Natural killer cell (primary cell): ENCODE measurements at regions of chr1 and their contacts with region 1.

Region 1: DNA sequence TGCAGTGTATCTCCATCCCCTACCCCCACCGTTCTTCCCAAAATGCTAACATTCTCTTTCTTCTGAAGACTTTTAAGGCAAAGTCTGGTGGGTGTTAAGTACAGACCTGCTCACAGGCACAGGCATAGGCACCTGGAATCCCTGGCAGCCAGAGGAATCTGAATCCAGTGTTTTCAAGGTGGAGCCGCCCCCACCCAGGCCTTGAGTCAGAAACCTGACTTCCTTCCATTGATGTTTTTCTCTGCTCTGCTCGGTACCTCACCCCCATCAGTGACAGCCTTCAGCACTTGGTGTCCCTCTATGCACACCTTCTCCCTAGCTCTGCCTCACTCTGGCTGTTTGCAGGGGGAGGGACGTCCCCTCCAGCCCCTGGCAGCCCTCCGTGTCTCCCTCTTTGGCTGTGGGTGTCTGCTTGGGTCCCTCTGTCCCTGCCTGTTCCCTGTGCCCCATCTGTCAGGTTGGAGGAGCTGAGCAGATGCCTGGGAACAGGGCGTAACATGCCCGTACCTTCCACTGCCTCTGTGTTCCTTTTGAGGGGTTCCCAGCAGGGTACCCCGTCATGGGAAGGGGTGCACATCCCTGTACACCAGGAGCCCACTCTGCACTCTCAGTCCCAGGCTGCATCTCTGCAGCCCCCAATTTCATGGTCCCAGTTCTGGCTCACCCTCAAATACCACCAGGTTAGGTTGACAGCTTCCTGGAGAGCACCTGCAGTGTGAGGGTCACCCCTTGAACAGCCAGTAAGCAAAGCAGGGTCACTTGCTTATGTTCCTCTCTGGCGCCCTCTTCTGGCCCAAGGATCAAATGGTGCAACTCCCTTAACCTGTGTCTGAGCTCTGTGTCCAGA is 6.7 kb downstream of the NCDN start:
- DNase-seq: peak; percentile 76 to 90
- ATAC-seq: peak; percentile 73 to 90 (median 83)
- H3K4me3 ChIP-seq: no peak overlapping the region
- H3K4me3 Mint-ChIP-seq: no peak overlapping the region
- H3K27ac ChIP-seq: no peak overlapping the region
- H3K27ac Mint-ChIP-seq: peak overlapping the region in 1 of 2 donors; percentile 82
- H3K4me1 ChIP-seq: peaks cover 10% of the 10 kb centered on the region
- H3K4me1 Mint-ChIP-seq: peaks cover 20 to 47% of the 10 kb centered on the region in 2 donors
- H3K27me3 ChIP-seq: no peaks in the 10 kb centered on the region
- H3K27me3 Mint-ChIP-seq: no peaks in the 10 kb centered on the region
- CTCF ChIP-seq: peak; percentile 78

Region 2: DNA sequence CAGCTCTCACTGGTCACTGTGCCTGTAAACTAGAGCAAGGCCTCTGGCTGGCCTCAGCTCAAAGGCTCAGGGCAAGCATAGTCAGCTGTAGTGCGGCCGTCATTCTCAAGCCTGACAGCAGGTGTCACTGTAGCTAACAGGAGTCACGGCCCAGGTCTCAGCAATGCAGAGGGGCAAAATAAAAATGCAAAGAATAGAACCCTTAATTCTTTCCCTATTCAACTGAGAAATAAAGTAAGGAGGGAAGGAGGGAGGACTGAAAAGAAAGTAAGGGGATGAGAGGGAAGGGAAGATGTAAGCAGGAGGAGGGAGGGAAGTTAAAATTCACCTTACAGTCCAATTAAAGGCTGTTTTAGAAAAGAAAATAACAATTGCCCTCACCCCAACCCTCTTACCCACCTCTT is 113.1 kb before region 1 on chr1:
- intact Hi-C with region 1: loop called (anchors 1 kb)
- DNase-seq: peak; percentile 60 to 88
- ATAC-seq: peak; percentile 86 to 98 (median 97)
- H3K4me3 ChIP-seq: no peak overlapping the region
- H3K4me3 Mint-ChIP-seq: no peak overlapping the region
- H3K27ac ChIP-seq: no peak overlapping the region
- H3K27ac Mint-ChIP-seq: peak overlapping the region in 1 of 2 donors; percentile 12
- H3K4me1 ChIP-seq: no peaks in the 10 kb centered on the region
- H3K4me1 Mint-ChIP-seq: peaks cover 5 to 6% of the 10 kb centered on the region in 2 donors
- H3K27me3 ChIP-seq: no peaks in the 10 kb centered on the region
- H3K27me3 Mint-ChIP-seq: no peaks in the 10 kb centered on the region
- CTCF ChIP-seq: peak; percentile 79

Region 3: GRCh38 chr1:35641233-35641866 is 77.1 kb after region 1 on chr1 and contains the start of gene PSMB2:
- intact Hi-C with region 1: loop called (anchors 5 kb)
- DNase-seq: peak; percentile 97 to 98
- ATAC-seq: peak; percentile 94
- H3K4me3 ChIP-seq: peak within 1 kb of the TSS; percentile 92
- H3K4me3 Mint-ChIP-seq: peak within 1 kb of the TSS; percentile 100
- H3K27ac ChIP-seq: peak within 1 kb of the TSS; percentile 81
- H3K27ac Mint-ChIP-seq: peak within 1 kb of the TSS; percentile 99 to 100
- H3K4me1 ChIP-seq: peaks cover 12% of the 10 kb centered on the region
- H3K4me1 Mint-ChIP-seq: peaks cover 33 to 34% of the 10 kb centered on the region in 2 donors
- H3K27me3 ChIP-seq: peaks cover under 1% of the 10 kb centered on the region
- H3K27me3 Mint-ChIP-seq: peaks cover 12 to 25% of the 10 kb centered on the region in 2 donors
- CTCF ChIP-seq: no peak
- total RNA-seq, gene PSMB2: 37.0 to 45.0 (median 37.3) TPM

Region 4: GRCh38 chr1:35715568-35716002 is 151.3 kb after region 1 on chr1:
- intact Hi-C with region 1: loop called (anchors 1 kb)
- DNase-seq: peak; percentile 67 to 88
- ATAC-seq: peak; percentile 53 to 77 (median 58)
- H3K4me3 ChIP-seq: no peak overlapping the region
- H3K4me3 Mint-ChIP-seq: no peak overlapping the region
- H3K27ac ChIP-seq: no peak overlapping the region
- H3K27ac Mint-ChIP-seq: peak overlapping the region in 1 of 2 donors; percentile 52
- H3K4me1 ChIP-seq: peaks cover 27% of the 10 kb centered on the region
- H3K4me1 Mint-ChIP-seq: peaks cover 41 to 45% of the 10 kb centered on the region in 2 donors
- H3K27me3 ChIP-seq: no peaks in the 10 kb centered on the region
- H3K27me3 Mint-ChIP-seq: no peaks in the 10 kb centered on the region
- CTCF ChIP-seq: peak; percentile 85

Region 5: GRCh38 chr1:35726450-35727433 is 162.5 kb after region 1 on chr1:
- intact Hi-C with region 1: loop called (anchors 1 kb)
- DNase-seq: peak; percentile 44 to 83
- ATAC-seq: peak; percentile 79 to 97 (median 93)
- H3K4me3 ChIP-seq: no peak overlapping the region
- H3K4me3 Mint-ChIP-seq: no peak overlapping the region
- H3K27ac ChIP-seq: no peak overlapping the region
- H3K27ac Mint-ChIP-seq: peak overlapping the region in 1 of 2 donors; percentile 47
- H3K4me1 ChIP-seq: peaks cover 5% of the 10 kb centered on the region
- H3K4me1 Mint-ChIP-seq: peaks cover 6 to 7% of the 10 kb centered on the region in 2 donors
- H3K27me3 ChIP-seq: no peaks in the 10 kb centered on the region
- H3K27me3 Mint-ChIP-seq: no peaks in the 10 kb centered on the region
- CTCF ChIP-seq: peak; percentile 94

Region 6: DNA sequence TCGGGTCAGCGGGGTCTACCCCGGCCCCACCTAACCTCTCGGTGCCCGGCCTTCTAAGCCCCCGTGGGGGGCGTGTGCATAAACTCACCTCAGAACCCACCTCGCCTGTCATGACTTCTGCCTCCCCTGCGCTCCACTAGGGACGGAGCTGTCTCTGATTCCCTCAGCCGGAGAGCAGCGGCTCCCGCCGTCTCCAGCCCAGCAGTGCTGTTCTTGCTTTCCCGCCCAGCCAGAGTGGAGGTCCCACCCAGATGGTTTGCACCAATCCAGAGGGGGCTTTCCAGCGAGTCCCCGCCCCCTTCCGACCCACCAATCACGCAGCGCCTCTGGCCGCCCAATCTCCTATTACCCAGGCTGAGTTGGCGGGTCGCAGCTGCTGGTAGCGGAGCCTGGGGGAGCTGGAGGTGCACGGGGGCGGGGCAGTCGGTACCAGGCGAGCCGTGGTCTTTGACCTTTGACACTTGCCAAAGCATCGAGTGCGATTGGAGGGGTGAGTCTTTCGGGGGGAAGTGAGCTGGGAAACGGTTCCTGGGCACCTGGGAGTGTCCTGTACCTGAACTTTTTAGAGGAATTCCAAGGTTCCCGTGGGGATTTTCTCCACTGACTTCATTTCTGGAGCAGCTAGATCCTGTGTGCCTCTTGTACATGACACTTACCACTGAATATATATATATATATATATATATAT is 205.6 kb after region 1 on chr1 and contains the start of gene CLSPN:
- intact Hi-C with region 1: loop called (anchors 1 kb)
- DNase-seq: peak; percentile 92 to 95
- ATAC-seq: peak; percentile 91 to 97 (median 92)
- H3K4me3 ChIP-seq: peak within 1 kb of the TSS; percentile 86
- H3K4me3 Mint-ChIP-seq: peak within 1 kb of the TSS; percentile 99
- H3K27ac ChIP-seq: peak within 1 kb of the TSS; percentile 87
- H3K27ac Mint-ChIP-seq: peak within 1 kb of the TSS; percentile 88 to 93
- H3K4me1 ChIP-seq: peaks cover 12% of the 10 kb centered on the region
- H3K4me1 Mint-ChIP-seq: peaks cover 5 to 11% of the 10 kb centered on the region in 2 donors
- H3K27me3 ChIP-seq: no peaks in the 10 kb centered on the region
- H3K27me3 Mint-ChIP-seq: no peaks in the 10 kb centered on the region
- CTCF ChIP-seq: no peak
- total RNA-seq, gene CLSPN: 1.9 to 4.9 (median 2.4) TPM